Ascending aorta (tissue), 2 donors: ENCODE measurements at regions of chr11 and their contacts with region 1.

Region 1: GRCh38 chr11:3057069-3057963 is at the start of gene CARS1:
- DNase-seq: peak; percentile 87 to 99
- H3K4me3 ChIP-seq: peak within 1 kb of the TSS; percentile 80 to 88
- H3K27ac ChIP-seq: peak within 1 kb of the TSS; percentile 71 to 81
- H3K4me1 ChIP-seq: peaks cover 0 to 11% of the 10 kb centered on the region in 2 donors
- H3K27me3 ChIP-seq: no peaks in the 10 kb centered on the region
- CTCF ChIP-seq: no peak
- total RNA-seq, gene CARS1: 51.4 TPM

Region 2: DNA sequence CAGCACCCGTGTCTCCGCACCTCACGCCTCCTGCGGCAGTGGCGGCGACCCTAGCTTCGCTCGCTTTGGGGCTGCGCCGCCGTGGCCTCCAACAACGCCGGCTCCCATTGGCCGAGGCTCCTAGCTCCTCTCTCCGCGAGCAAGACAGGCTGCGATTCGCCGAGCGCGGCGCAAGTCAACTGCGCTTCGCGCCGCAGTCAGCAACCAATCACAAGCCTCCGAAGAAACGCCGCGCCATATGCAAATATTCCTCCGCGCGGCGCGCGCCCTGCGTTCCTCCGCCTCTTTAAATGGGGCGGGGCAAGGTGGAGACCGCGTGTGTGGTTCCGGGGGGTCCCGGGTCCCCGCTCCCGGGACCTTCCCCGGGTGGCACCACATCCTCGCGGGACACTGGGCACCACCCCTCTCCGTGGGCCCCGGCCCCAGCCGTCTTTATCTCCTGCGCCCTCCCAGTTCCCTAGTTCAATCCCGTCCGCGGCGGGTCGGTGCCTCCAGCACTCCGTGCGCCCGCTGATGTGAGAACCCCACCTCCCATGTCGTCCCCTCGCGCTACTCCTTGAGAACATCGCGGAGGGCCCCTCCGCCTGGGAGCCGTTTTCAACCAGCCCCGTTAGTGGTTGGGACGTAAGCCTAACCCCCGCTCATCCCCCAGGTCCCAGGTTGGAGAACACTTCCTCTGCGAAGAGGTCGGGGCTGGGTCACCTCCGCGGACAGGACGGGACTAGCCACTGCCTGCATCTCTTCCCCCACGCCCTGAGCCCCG is 64.9 kb before region 1 on chr11 and contains the start of gene NAP1L4:
- intact Hi-C with region 1: loop called (anchors 2 kb)
- DNase-seq: peak; percentile 85 to 97
- H3K4me3 ChIP-seq: peak within 1 kb of the TSS; percentile 74 to 80
- H3K27ac ChIP-seq: peak within 1 kb of the TSS; percentile 71 to 90
- H3K4me1 ChIP-seq: peaks cover 6 to 27% of the 10 kb centered on the region in 2 donors
- H3K27me3 ChIP-seq: no peaks in the 10 kb centered on the region
- CTCF ChIP-seq: no peak
- total RNA-seq, gene NAP1L4: 54.5 TPM

Region 3: DNA sequence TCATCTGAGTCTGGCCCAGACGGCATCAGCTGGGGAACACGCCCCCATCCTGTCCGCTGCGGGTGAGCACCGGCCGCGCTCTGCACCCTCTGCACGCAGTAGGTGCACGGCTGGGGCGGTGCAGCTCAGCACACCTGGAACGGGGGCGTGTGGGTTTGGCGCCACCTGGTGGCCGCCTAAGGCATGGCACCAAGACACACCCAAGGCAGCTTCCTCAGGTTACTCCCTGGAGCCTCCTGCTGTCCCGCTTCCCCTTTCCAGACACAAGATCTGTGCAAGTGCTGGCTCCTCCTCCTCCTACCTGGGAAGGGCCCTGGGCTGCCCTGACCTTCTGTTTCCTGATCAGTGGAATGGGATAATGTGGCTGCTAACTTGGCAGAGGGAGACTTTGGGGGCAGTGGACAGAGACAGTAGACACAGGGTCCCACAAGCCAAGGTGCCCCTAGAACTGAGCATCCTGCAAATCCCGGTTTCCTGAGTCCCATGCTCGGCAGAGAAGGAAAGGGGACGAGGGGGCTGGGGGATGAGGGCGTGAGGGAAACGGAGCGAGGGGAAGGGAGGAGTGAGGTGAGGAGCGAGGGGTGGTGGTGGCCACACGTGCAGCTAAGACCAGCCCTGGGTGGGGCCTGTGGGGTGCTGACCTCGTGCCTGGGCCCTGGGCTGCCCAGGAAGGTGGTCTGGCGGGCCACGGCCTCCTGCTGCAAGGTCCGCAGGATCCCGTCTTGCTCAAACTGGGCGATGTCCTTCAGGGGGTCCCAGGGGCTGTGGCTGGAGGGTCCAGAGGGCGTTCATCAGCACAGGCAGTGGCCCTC is 34.7 kb after region 1 on chr11:
- intact Hi-C with region 1: loop called (anchors 5 kb)
- DNase-seq: no peak
- H3K4me3 ChIP-seq: no peak overlapping the region
- H3K27ac ChIP-seq: no peak overlapping the region
- H3K4me1 ChIP-seq: peaks cover 0 to 3% of the 10 kb centered on the region in 2 donors
- H3K27me3 ChIP-seq: no peaks in the 10 kb centered on the region
- CTCF ChIP-seq: peak; percentile 93 to 100 (median 99)